ENCODE measurements at regions of chr3 and their contacts with region 1.

Region 1: GRCh38 chr3:194070634-194071409 is 65.1 kb upstream of the HES1 start:
- DNase-seq: peak in 9 of 10 donors; percentile 19 to 79 (median 65)
- H3K4me3 ChIP-seq: peak overlapping the region; percentile 45 to 80 (median 65)
- H3K27ac ChIP-seq: peak overlapping the region in 52 of 59 donors; percentile 13 to 90 (median 75)
- H3K27me3 ChIP-seq: no peaks in the 10 kb centered on the region
- CTCF ChIP-seq: peak in 2 of 56 donors; percentile 10 to 24

Region 2: DNA sequence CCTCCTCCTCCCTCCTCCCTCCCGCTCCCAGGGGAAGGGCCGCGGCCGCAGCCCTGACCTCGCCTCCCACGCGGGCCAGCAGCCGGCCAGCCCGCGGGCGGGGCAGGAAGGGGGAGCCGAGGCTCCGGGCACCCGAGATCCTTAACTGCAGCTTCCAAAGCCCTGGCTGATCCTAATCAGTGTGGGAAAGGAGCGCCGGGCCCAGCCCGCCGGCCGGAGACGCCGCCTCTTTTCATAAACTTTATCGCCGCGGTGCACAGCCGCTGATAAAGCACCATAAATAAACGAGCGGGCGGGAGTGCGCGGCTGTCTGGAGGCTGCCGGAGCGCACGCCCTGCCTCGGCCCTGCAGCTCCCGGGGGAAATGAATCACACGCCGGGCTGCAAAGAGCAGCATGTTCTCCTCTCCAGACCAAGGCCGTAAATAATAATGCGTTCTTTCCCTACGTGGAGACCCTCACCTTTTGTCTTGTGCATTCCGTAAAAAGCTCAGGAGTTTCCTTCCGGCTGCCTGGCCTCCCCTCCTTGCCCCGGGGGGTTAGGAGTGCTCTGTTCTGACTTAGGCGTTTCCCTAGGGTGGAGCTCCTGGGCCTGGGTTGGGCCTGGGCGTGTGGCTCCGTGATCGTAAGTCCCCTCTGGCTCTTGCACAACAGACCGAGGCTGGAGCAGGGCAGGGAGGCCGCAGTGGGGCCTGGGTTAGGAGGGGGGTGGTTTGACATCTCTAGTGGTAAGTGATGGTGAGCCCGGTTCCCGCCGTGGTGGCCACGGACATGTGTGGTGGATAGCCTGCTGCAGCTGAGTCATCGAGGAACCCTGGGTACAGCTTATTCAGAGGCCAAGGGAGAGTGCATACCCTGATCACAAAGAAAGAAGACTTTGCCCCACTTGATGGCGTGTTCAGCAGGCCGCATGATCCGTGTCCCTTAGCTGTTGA is 67.4 kb before region 1 on chr3:
- intact Hi-C with region 1: loop called in 1 of 2 experiments (anchors 5 kb)
- DNase-seq: peak in 4 of 10 donors; percentile 32 to 63 (median 54)
- H3K4me3 ChIP-seq: peak overlapping the region; percentile 28 to 70 (median 55)
- H3K27ac ChIP-seq: peak overlapping the region in 23 of 59 donors; percentile 9 to 70 (median 41)
- H3K27me3 ChIP-seq: peaks cover 0 to 7% (median 0%) of the 10 kb centered on the region in 45 donors
- CTCF ChIP-seq: no peak

Region 3: GRCh38 chr3:194014756-194015155 is 56.1 kb before region 1 on chr3:
- intact Hi-C with region 1: no loop called
- DNase-seq: no peak
- H3K4me3 ChIP-seq: no peak overlapping the region
- H3K27ac ChIP-seq: no peak overlapping the region
- H3K27me3 ChIP-seq: peaks cover 0 to 3% (median 0%) of the 10 kb centered on the region in 45 donors
- CTCF ChIP-seq: no peak

Measured in dorsolateral prefrontal cortex (tissue), 120 donors.